H1 (cell line): ENCODE measurements at regions of chr15 and their contacts with region 1.

Region 1: GRCh38 chr15:100349696-100350433 is 8.1 kb upstream of the ADAMTS17 start:
- DNase-seq: peak; percentile 74 to 97
- H3K4me3 ChIP-seq: peak overlapping the region; percentile 64 to 96 (median 93)
- H3K27ac ChIP-seq: no peak overlapping the region
- H3K4me1 ChIP-seq: peaks cover 0 to 3% (median 1%) of the 10 kb centered on the region in 4 experiments; a peak in 2 of 7 replicates
- H3K27me3 ChIP-seq: peaks cover 0 to 8% (median 5%) of the 10 kb centered on the region in 4 experiments; a peak in 6 of 7 replicates
- CTCF ChIP-seq: peak; percentile 88 to 99 (median 92)
- EP300 ChIP-seq: peak in 1 of 2 experiments; percentile 64; a peak in 1 of 3 replicates
- POLR2A ChIP-seq: no peak
- RAD21 ChIP-seq: peak; percentile 74 to 77

Region 2: DNA sequence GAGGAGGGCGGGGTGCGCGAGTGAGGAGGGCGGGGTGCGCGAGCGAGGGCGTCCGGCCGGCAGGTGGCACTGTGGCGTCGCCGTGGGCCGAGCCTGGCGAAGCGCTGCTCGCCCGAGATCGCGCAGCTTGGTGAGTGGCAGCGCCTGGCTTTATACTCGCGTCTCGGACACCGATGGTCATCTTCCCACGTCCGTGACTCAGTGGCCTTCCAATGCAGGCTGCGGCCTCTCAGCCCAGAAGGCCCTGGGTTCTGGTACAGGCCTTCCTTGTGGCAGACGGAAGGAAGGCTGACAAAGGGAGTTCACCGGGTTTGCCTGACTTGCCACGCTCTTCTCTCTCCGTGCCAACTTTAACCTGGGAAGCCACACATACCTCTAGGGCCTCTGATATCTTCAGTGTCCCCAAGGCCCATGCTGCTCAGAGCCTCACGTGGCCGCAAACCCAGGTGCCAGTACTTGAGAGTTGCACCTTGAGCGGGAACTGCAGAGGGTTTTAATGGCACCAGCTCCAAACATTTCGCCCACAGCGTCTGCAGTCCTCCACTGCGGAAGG is 421.4 kb before region 1 on chr15:
- CTCF ChIA-PET with region 1: interaction called, 10 read pairs
- POLR2A ChIA-PET with region 1: interaction called, 3 read pairs
- DNase-seq: peak in 1 of 2 experiments; percentile 80
- H3K4me3 ChIP-seq: peak overlapping the region; percentile 51 to 80 (median 76)
- H3K27ac ChIP-seq: peak overlapping the region; percentile 45; the same call in 1 of the 2 replicates
- H3K4me1 ChIP-seq: peaks cover 5 to 13% (median 10%) of the 10 kb centered on the region in 4 experiments; a peak in 6 of 7 replicates
- H3K27me3 ChIP-seq: peaks cover 1 to 11% (median 8%) of the 10 kb centered on the region in 4 experiments; a peak in 6 of 7 replicates
- CTCF ChIP-seq: peak; percentile 34 to 76 (median 60); a peak in 3 of 4 replicates
- EP300 ChIP-seq: no peak
- POLR2A ChIP-seq: no peak
- RAD21 ChIP-seq: peak; percentile 56 to 68

Region 3: DNA sequence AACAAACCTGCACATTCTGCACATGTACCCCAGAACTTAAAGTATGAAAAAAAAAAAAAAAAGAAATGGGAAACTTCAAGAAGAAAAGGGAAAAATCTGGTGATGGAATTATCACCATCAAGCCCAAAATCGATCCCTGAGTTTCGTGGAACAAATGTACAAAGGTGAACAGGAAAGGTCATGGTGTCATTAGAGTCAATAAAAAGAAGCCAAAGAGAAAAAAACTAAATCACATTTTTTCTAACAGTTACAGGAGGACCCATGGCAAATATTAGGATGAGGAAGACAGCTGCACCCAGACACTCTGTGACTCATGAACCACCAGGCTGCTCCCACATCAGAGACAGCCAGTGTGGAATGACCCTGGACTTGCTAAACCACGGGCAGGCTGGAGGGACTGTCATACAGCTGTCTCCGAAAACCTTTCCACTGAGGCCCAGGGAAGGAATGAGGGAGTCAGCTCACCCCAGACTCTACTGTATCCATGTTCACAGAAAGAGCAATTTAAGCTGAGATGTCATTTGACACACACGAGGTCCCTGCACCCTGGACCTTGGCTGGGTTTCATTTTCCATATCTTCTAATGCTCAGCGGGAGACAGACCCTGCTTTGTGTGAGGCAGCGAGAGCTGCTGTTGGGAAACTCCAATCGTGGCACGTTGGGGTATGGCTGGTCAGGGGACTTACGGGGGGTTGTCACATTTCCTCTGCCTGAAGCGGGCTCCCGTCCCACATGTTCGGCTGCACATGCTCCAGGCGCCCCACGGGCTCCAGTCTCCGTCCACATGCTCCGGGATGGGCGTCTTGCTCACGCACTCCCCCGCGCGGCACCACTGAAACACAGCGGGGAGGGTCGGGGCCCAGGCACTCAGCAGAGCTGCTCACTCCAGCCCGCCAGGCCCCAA is 218.3 kb before region 1 on chr15:
- CTCF ChIA-PET with region 1: interaction called, 18 read pairs
- POLR2A ChIA-PET with region 1: no interaction called
- DNase-seq: no peak
- H3K4me3 ChIP-seq: no peak overlapping the region
- H3K27ac ChIP-seq: no peak overlapping the region
- H3K4me1 ChIP-seq: no peaks in the 10 kb centered on the region
- H3K27me3 ChIP-seq: no peaks in the 10 kb centered on the region
- CTCF ChIP-seq: peak; percentile 10 to 17 (median 14); a peak in 3 of 4 replicates
- EP300 ChIP-seq: no peak
- POLR2A ChIP-seq: no peak
- RAD21 ChIP-seq: peak; percentile 33 to 50; a peak in 3 of 4 replicates

Region 4: DNA sequence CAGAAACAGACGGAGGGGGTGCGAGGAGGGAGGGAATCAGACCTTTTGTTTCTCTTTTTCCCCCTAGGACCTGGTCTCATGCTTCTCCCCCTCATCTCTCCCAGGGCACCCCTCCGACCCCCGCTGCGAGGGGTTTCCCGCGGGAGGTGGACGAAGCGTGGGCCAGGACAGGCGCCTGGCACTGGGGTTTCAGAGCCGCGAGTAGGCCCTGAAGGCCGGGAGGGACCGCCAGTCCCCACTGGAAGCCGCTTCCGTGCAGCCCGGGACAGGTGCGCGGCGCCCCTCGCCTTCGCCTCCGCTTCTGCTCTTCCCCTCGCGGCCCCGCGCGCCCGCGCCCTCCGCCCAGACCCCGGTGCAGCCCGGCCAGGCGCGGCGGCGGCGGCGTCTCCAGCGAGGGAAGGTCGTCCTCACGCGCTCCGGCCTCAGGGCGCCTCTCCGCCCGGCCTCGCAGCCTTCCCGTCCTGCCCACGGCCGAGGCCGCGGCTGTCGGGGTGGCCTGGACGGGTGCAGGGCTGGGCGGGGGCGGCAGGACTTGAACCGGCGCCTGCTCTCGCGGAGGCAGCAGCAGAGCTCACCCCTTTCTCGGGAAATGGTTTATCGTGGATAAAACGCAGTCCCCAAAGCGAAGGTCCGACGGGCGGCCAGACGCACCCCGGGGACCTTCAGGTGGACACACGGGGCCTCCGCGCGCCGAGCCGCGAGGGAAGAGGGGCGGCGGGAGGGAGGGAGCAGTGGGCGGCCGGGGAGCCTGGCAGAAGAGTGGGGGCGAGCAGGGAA is 23.4 kb after region 1 on chr15:
- CTCF ChIA-PET with region 1: interaction called, 76 read pairs
- POLR2A ChIA-PET with region 1: interaction called, 18 read pairs
- DNase-seq: peak in 1 of 2 experiments; percentile 58
- H3K4me3 ChIP-seq: peak overlapping the region; percentile 60 to 94 (median 68)
- H3K27ac ChIP-seq: no peak overlapping the region
- H3K4me1 ChIP-seq: no peaks in the 10 kb centered on the region; a peak in 2 of 7 replicates
- H3K27me3 ChIP-seq: peaks cover 5 to 26% (median 12%) of the 10 kb centered on the region in 4 experiments; a peak in 6 of 7 replicates
- CTCF ChIP-seq: no peak
- EP300 ChIP-seq: no peak
- POLR2A ChIP-seq: no peak
- RAD21 ChIP-seq: no peak

Region 5: GRCh38 chr15:100383302-100384107 is 33.6 kb after region 1 on chr15:
- CTCF ChIA-PET with region 1: interaction called, 76 read pairs
- POLR2A ChIA-PET with region 1: interaction called, 6 read pairs
- DNase-seq: peak in 1 of 2 experiments; percentile 51
- H3K4me3 ChIP-seq: no peak overlapping the region
- H3K27ac ChIP-seq: no peak overlapping the region
- H3K4me1 ChIP-seq: no peaks in the 10 kb centered on the region
- H3K27me3 ChIP-seq: no peaks in the 10 kb centered on the region
- CTCF ChIP-seq: peak; percentile 29 to 66 (median 66)
- EP300 ChIP-seq: no peak
- POLR2A ChIP-seq: no peak
- RAD21 ChIP-seq: peak; percentile 72 to 77

Region 6: DNA sequence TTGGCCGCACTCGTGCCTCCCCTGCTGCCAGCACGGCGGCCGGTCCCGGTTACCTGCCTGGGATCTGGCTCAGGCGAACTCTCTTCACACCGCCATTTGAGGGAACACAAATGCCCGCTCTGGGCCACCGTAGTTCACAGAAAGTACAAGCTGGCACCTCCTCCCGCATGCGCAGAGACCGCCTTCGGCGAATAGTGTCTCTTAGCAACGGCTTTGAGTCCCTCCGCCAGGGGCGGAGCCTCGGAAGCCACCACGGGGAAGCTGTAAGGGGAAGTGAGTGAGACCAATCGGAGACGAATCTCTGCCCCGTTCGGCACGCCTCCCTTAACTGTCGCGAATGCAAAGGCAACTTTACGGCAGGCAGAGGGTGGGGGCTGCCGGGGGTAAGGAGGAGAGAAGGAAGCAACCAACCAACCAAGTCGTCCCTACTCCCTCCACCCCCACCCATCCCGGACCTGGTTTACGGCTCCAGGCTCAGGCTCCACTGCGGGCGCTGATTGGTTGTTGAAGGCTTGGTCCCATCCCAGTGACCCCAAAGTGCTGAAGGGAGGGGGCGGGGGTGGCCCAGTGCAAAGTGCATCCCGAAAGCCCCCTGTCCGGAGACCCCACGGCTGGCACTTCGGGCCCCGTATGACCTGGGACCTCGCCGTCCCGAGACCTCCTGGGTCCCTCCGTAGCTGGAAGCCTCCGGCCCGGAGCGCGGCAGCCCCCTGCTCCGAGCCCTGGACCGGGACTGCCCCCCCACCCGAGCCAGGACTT is 252.4 kb after region 1 on chr15 and contains the starts of genes ASB7 and LINS1:
- CTCF ChIA-PET with region 1: interaction called, 20 read pairs
- POLR2A ChIA-PET with region 1: interaction called, 9 read pairs
- DNase-seq: peak; percentile 95 to 100
- H3K4me3 ChIP-seq: peak within 1 kb of the TSS; percentile 96 to 99 (median 98)
- H3K27ac ChIP-seq: peak within 1 kb of the TSS; percentile 71
- H3K4me1 ChIP-seq: peaks cover 0 to 9% (median 4%) of the 10 kb centered on the region in 4 experiments; a peak in 3 of 7 replicates
- H3K27me3 ChIP-seq: no peaks in the 10 kb centered on the region
- CTCF ChIP-seq: no peak
- EP300 ChIP-seq: no peak
- POLR2A ChIP-seq: no peak; a peak in 1 of 3 replicates
- RAD21 ChIP-seq: no peak
- total RNA-seq, gene ASB7: 9.7 and 12.8 TPM in 2 replicates
- total RNA-seq, gene LINS1: 6.1 and 8.1 TPM in 2 replicates